Activated CD4-positive, alpha-beta T cell treated with anti-CD3 and anti-CD28 coated beads for 36 hours (primary cell): ENCODE measurements at regions of chr19 and their contacts with region 1.

Region 1: DNA sequence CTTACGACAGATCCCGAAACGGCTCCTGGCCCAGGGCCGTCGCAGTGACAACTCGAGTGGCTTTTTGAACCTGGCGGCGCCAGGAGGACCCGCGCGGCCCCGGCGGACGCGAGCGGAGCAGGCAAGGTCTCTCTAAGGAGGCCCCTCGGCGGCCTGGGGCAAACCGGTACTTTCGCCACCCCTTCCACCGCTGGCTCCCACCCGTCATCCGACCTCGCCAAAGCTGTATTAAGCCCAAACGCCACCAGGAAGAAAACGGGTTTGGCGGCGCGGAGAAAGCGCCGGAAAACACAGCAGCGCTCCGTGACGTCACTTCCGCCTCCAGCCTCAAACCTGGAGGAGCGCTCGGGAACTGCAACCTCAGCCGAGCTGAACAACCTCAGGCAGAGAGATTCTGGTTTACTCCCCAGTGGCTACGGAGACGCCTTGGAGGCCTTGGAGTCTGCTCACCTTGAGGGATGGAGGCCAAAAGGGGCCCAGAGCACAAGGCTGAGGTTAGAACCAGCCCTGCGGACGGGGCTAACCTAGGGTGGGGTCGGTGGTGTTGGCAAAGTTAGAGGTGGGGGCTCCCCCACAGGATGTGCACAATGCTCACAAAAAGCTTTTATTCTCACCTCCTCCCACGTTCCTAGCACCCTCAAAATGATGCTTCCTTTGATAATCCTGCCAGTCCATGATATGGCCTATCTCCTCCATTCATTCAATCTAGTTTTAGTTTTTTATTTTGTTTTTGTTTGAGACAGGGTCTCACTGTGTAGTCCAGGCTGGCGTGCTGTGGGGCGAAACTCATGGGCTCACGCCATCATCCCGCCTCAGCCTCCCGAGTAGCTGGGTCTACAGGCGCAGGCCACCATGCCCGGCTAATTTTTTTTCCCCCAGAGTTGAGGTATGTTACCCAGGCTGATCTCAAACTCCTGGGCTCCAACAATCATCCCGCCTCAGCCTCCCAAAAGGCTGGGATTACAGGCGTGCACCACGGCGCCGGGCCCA is at the start of gene ZNF266:
- DNase-seq: peak; percentile 97
- ATAC-seq: peak; percentile 91
- H3K4me3 Mint-ChIP-seq: peak within 1 kb of the TSS; percentile 95
- H3K27ac Mint-ChIP-seq: peak within 1 kb of the TSS; percentile 99
- H3K4me1 Mint-ChIP-seq: peaks cover 33% of the 10 kb centered on the region
- H3K27me3 Mint-ChIP-seq: no peaks in the 10 kb centered on the region
- total RNA-seq, gene ZNF266: 17.1 to 22.4 TPM

Region 2: GRCh38 chr19:8005534-8006256 is 1429.9 kb before region 1 on chr19 and contains the start of gene ELAVL1:
- CTCF ChIA-PET with region 1: no interaction called
- POLR2A ChIA-PET with region 1: no interaction called
- intact Hi-C with region 1: loop called in 1 of 2 experiments (anchors 5 kb)
- DNase-seq: peak; percentile 95
- ATAC-seq: peak; percentile 93
- H3K4me3 Mint-ChIP-seq: peak within 1 kb of the TSS; percentile 95
- H3K27ac Mint-ChIP-seq: peak within 1 kb of the TSS; percentile 94
- H3K4me1 Mint-ChIP-seq: peaks cover 36% of the 10 kb centered on the region
- H3K27me3 Mint-ChIP-seq: no peaks in the 10 kb centered on the region
- total RNA-seq, gene ELAVL1: 149 to 184 TPM

Region 3: GRCh38 chr19:9205501-9206113 is 230.0 kb before region 1 on chr19:
- CTCF ChIA-PET with region 1: interaction called, 5 read pairs
- POLR2A ChIA-PET with region 1: no interaction called
- intact Hi-C with region 1: loop called (anchors 1 to 10 kb)
- DNase-seq: peak; percentile 79
- ATAC-seq: peak; percentile 75
- H3K4me3 Mint-ChIP-seq: no peak overlapping the region
- H3K27ac Mint-ChIP-seq: no peak overlapping the region
- H3K4me1 Mint-ChIP-seq: no peaks in the 10 kb centered on the region
- H3K27me3 Mint-ChIP-seq: peaks cover 9% of the 10 kb centered on the region

Region 4: DNA sequence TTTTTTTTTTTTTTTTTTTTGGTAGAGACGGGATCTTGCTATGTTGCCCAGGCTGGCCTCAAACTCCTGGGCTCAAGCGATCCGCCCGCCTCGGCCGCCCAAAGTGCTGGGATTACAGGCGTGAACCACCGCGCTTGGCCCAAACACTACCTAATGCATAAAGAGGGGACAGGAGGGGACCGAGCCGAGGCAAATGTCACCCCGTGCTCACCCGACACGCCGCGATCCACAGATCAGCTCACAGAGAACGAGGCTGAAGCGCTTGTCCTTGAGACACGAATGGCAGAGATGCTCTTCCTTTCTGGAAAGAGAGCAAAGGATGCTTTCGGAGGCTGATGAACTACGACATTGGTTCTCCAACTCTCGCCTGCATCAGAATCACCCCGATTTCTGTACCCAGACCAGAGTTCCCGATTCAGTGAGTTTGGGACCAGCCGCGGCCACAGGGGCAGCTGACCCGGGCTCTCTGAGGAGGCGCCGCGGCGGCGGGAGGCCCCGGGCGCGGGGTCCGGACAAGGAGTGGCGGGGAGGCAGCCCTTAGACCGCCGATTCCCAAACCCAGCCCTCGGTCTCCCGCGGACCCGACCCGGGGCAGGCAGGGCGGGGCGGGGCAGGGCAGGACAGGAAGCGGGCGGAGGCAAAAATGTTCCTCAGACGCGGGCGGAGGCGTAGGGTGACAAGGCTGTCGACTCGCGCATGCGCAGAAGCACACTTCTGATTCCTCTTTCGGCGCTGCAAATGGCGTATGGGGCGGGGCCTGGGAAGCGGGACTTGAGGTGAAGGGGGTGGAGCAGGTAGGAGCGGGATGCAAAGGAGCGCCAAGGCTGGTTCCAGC is 126.2 kb before region 1 on chr19 and contains the start of gene ZNF699:
- CTCF ChIA-PET with region 1: no interaction called
- POLR2A ChIA-PET with region 1: no interaction called
- intact Hi-C with region 1: loop called in 1 of 2 experiments (anchors 1 kb)
- DNase-seq: peak; percentile 100
- ATAC-seq: peak; percentile 90
- H3K4me3 Mint-ChIP-seq: peak within 1 kb of the TSS; percentile 97
- H3K27ac Mint-ChIP-seq: peak within 1 kb of the TSS; percentile 97
- H3K4me1 Mint-ChIP-seq: peaks cover 13% of the 10 kb centered on the region
- H3K27me3 Mint-ChIP-seq: no peaks in the 10 kb centered on the region
- total RNA-seq, gene ZNF699: 6.7 to 7.1 TPM

Region 5: GRCh38 chr19:9538183-9539058 is 102.8 kb after region 1 on chr19 and contains the start of gene ZNF426:
- CTCF ChIA-PET with region 1: no interaction called
- POLR2A ChIA-PET with region 1: no interaction called
- intact Hi-C with region 1: loop called in 1 of 2 experiments (anchors 1 kb)
- DNase-seq: peak; percentile 95
- ATAC-seq: peak; percentile 97
- H3K4me3 Mint-ChIP-seq: peak within 1 kb of the TSS; percentile 97
- H3K27ac Mint-ChIP-seq: peak within 1 kb of the TSS; percentile 98
- H3K4me1 Mint-ChIP-seq: peaks cover 14% of the 10 kb centered on the region
- H3K27me3 Mint-ChIP-seq: no peaks in the 10 kb centered on the region
- total RNA-seq, gene ZNF426: 10.4 to 12.3 TPM

Region 6: GRCh38 chr19:9584073-9584833 is 148.7 kb after region 1 on chr19 and contains the start of gene ZNF121:
- CTCF ChIA-PET with region 1: no interaction called
- POLR2A ChIA-PET with region 1: no interaction called
- intact Hi-C with region 1: loop called in 1 of 2 experiments (anchors 2 kb)
- DNase-seq: peak; percentile 91
- ATAC-seq: peak; percentile 82
- H3K4me3 Mint-ChIP-seq: peak within 1 kb of the TSS; percentile 93
- H3K27ac Mint-ChIP-seq: peak within 1 kb of the TSS; percentile 94
- H3K4me1 Mint-ChIP-seq: peaks cover 29% of the 10 kb centered on the region
- H3K27me3 Mint-ChIP-seq: peaks cover 4% of the 10 kb centered on the region
- total RNA-seq, gene ZNF121: 71.4 to 75.3 TPM

Region 7: GRCh38 chr19:9674663-9675357 is 239.2 kb after region 1 on chr19 and contains the start of gene ZNF562:
- CTCF ChIA-PET with region 1: no interaction called
- POLR2A ChIA-PET with region 1: no interaction called
- intact Hi-C with region 1: loop called in 1 of 2 experiments (anchors 1 kb)
- DNase-seq: peak; percentile 91
- ATAC-seq: peak; percentile 78
- H3K4me3 Mint-ChIP-seq: peak within 1 kb of the TSS; percentile 94
- H3K27ac Mint-ChIP-seq: peak within 1 kb of the TSS; percentile 97
- H3K4me1 Mint-ChIP-seq: peaks cover 30% of the 10 kb centered on the region
- H3K27me3 Mint-ChIP-seq: no peaks in the 10 kb centered on the region
- total RNA-seq, gene ZNF562: 29.9 to 39.7 TPM

Region 8: DNA sequence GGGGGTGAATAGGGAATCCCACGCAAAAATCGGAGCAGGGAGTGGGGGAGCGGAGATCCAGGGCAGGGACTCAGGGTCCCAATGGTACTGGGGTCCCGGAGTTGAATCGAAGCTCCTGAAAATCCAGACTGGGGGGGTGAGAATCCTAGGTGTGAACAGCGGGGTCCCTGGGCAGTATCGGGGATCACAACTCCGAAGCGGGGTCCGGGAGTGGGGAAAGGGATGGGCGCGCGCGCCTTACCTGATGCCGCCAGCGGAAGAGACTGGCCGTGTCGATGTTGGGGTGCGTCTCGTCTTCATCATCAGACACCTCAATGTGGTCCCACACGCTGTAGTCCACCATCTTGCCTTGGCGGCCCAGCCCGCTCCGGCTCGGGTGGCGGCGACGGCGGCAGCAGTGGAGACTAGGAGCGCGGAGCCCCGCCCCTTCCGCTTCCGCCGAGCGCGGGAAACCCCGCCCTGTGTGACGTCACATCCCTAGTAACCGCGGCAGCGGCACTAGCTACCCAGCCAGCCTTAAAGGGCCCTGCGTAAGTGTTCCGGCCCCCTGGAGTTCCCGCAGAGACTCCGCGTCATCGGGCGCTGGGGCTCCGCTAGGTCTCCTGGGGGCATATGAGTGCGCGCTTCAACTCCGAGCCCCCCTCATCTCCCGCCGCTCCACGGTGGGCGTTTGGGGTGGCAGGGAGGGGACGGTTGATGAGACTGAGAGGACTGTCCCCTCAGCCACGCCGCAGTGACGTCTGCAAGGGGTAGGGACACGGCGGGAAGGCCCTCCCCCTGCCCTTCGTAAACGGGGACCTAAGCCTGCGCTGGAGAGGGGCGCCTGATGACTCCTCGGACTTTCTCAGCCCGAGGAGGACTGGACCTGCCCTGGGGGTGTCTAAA is 967.8 kb after region 1 on chr19 and contains the start of gene CDC37:
- CTCF ChIA-PET with region 1: no interaction called
- POLR2A ChIA-PET with region 1: no interaction called
- intact Hi-C with region 1: no loop called
- DNase-seq: peak; percentile 99
- ATAC-seq: peak; percentile 79
- H3K4me3 Mint-ChIP-seq: peak within 1 kb of the TSS; percentile 94
- H3K27ac Mint-ChIP-seq: peak within 1 kb of the TSS; percentile 87
- H3K4me1 Mint-ChIP-seq: peaks cover 61% of the 10 kb centered on the region
- H3K27me3 Mint-ChIP-seq: no peaks in the 10 kb centered on the region
- total RNA-seq, gene CDC37: 178 to 190 TPM